Naive thymus-derived CD4-positive, alpha-beta T cell (primary cell): ENCODE measurements at regions of chr1 and their contacts with region 1.

Region 1: DNA sequence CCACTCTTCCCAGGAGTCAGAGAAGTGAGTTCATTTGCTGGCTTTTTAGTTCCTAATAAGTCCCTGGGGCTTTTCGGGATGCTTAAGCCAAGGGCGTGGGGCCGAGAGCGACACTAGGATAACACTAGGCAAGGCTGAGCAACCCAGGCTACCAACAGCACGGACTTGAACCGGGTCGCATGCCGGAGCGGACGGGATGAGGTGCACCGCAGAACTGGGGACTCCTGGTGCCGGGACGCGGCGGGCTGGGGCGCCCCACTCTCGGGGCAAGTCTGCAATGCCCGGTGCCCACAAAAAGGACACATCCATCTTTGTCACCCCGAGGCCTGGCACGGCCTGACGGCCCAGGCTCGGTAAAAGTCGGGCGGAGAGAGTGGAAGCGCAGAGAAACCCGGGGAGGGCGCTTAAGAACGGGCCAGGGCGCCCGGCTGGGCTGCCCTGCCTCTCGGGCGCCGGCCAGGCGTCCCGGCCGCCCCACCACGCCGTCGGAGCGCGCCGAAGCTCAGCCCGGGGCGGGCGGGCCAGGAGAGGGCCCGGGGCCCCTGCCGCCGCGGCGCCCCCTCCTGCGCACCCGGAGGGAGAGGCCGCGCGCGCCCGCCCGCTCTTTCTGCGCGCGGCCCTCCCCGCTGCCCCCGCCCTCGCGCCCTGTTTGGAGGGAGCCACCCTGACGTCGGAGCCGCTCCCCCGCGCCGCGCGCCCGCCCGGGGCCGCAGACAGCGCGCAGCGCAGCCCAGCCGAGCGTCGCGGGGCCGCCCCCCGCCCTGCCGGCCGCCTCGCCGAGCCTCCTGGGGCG is at the start of gene NBL1:
- DNase-seq: peak; percentile 60 to 86 (median 71)
- ATAC-seq: peak; percentile 93
- H3K4me3 ChIP-seq: peak within 1 kb of the TSS; percentile 62
- H3K4me3 Mint-ChIP-seq: peak within 1 kb of the TSS; percentile 87 to 100 (median 97)
- H3K27ac ChIP-seq: peak within 1 kb of the TSS; percentile 69
- H3K27ac Mint-ChIP-seq: peak within 1 kb of the TSS; percentile 80 to 98 (median 92)
- H3K4me1 ChIP-seq: peaks cover 6 to 7% of the 10 kb centered on the region in 2 donors
- H3K4me1 Mint-ChIP-seq: peaks cover 17 to 38% (median 33%) of the 10 kb centered on the region in 7 donors
- H3K27me3 ChIP-seq: no peaks in the 10 kb centered on the region
- H3K27me3 Mint-ChIP-seq: peaks cover 0 to 29% (median 8%) of the 10 kb centered on the region in 5 donors
- total RNA-seq, gene NBL1: 20.7 to 36.1 (median 22.8) TPM

Region 2: DNA sequence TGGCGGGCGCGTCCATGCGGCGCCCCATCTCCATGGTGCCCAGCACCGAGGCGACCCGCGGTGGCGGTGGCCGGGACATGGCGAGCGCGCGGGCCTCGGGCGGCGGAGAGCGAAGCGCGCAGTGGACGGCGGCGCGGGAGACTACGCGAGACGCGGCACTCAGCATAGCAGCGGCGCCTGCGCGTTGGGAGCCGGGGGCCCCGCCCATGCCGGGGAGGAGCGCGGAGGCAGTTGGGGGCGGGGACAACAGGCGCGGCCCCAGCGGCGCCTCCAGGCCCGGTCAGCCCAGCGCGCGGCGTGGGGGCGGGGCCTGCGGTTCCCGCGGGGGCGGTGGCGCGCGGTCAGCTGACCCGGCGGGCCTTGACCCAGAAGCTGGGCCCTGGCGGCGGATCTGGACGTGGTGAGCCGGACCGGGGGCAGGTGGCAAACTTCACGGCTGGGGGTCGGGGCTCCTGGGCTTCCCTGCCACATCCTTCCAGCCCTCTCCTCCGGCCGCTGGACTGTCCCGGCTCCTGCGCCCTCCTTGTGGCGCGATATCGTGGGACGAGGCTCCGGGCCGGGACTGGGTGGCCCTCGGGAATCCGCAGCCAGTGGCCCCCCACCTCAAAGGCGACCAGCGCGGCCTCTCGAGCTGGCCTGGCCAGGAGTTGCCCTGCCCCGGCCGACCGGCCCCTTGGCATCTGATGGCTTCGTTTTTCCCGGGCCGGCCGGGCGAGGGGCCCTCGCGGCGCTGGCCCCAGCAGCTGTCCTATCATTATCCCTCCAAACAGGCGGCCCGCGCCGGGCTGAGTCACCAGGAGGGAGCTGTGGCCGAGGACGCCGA is 331.6 kb before region 1 on chr1 and contains the starts of genes AKR7A2 and SLC66A1:
- CTCF ChIA-PET with region 1: no interaction called
- POLR2A ChIA-PET with region 1: interaction called, 4 read pairs
- intact Hi-C with region 1: loop called (anchors 1 to 10 kb)
- DNase-seq: peak; percentile 68 to 97 (median 91)
- ATAC-seq: peak; percentile 98
- H3K4me3 ChIP-seq: peak within 1 kb of the TSS; percentile 76
- H3K4me3 Mint-ChIP-seq: peak within 1 kb of the TSS; percentile 86 to 94 (median 91)
- H3K27ac ChIP-seq: peak within 1 kb of the TSS; percentile 85
- H3K27ac Mint-ChIP-seq: peak within 1 kb of the TSS; percentile 33 to 83 (median 80)
- H3K4me1 ChIP-seq: peaks cover 16 to 17% of the 10 kb centered on the region in 2 donors
- H3K4me1 Mint-ChIP-seq: peaks cover 29 to 49% (median 44%) of the 10 kb centered on the region in 7 donors
- H3K27me3 ChIP-seq: no peaks in the 10 kb centered on the region
- H3K27me3 Mint-ChIP-seq: no peaks in the 10 kb centered on the region
- total RNA-seq, gene AKR7A2: 15.7 to 33.9 (median 25.2) TPM
- total RNA-seq, gene SLC66A1: 3.8 to 8.4 (median 7.2) TPM